CD4-positive, alpha-beta T cell (primary cell): ENCODE measurements at regions of chrX and their contacts with region 1.

Region 1: GRCh38 chrX:15674841-15675489 is 10.4 kb upstream of the CLTRN start:
- DNase-seq: peak; percentile 78 to 96 (median 86)
- ATAC-seq: peak; percentile 83
- H3K4me3 ChIP-seq: peak overlapping the region; percentile 90
- H3K4me3 Mint-ChIP-seq: no peak overlapping the region
- H3K27ac ChIP-seq: peak overlapping the region; percentile 99 to 100
- H3K27ac Mint-ChIP-seq: no peak overlapping the region
- H3K4me1 ChIP-seq: peaks cover 16% of the 10 kb centered on the region
- H3K4me1 Mint-ChIP-seq: no peaks in the 10 kb centered on the region
- H3K27me3 ChIP-seq: peaks cover 0 to 4% of the 10 kb centered on the region in 2 experiments
- H3K27me3 Mint-ChIP-seq: no peaks in the 10 kb centered on the region
- CTCF ChIP-seq: no peak

Region 2: GRCh38 chrX:15714529-15714928 is 39.6 kb after region 1 on chrX:
- CTCF ChIA-PET with region 1: no interaction called
- POLR2A ChIA-PET with region 1: no interaction called
- intact Hi-C with region 1: no loop called
- DNase-seq: no peak
- ATAC-seq: no peak
- H3K4me3 ChIP-seq: no peak overlapping the region
- H3K4me3 Mint-ChIP-seq: no peak overlapping the region
- H3K27ac ChIP-seq: no peak overlapping the region
- H3K27ac Mint-ChIP-seq: no peak overlapping the region
- H3K4me1 ChIP-seq: no peaks in the 10 kb centered on the region
- H3K4me1 Mint-ChIP-seq: no peaks in the 10 kb centered on the region
- H3K27me3 ChIP-seq: no peaks in the 10 kb centered on the region
- H3K27me3 Mint-ChIP-seq: no peaks in the 10 kb centered on the region
- CTCF ChIP-seq: no peak

Region 3: GRCh38 chrX:15737960-15738902 is 63.3 kb after region 1 on chrX and contains the start of gene CA5B:
- CTCF ChIA-PET with region 1: interaction called, 4 read pairs
- POLR2A ChIA-PET with region 1: interaction called, 13 read pairs
- intact Hi-C with region 1: loop called (anchors 2 to 5 kb)
- DNase-seq: peak; percentile 95 to 100 (median 97)
- ATAC-seq: peak; percentile 93
- H3K4me3 ChIP-seq: peak within 1 kb of the TSS; percentile 91
- H3K4me3 Mint-ChIP-seq: peak within 1 kb of the TSS; percentile 100
- H3K27ac ChIP-seq: peak within 1 kb of the TSS; percentile 64 to 82
- H3K27ac Mint-ChIP-seq: peak within 1 kb of the TSS; percentile 92
- H3K4me1 ChIP-seq: peaks cover 28% of the 10 kb centered on the region
- H3K4me1 Mint-ChIP-seq: peaks cover 55% of the 10 kb centered on the region
- H3K27me3 ChIP-seq: no peaks in the 10 kb centered on the region
- H3K27me3 Mint-ChIP-seq: no peaks in the 10 kb centered on the region
- CTCF ChIP-seq: no peak
- total RNA-seq, gene CA5B: 60.8 to 64.5 TPM

Region 4: DNA sequence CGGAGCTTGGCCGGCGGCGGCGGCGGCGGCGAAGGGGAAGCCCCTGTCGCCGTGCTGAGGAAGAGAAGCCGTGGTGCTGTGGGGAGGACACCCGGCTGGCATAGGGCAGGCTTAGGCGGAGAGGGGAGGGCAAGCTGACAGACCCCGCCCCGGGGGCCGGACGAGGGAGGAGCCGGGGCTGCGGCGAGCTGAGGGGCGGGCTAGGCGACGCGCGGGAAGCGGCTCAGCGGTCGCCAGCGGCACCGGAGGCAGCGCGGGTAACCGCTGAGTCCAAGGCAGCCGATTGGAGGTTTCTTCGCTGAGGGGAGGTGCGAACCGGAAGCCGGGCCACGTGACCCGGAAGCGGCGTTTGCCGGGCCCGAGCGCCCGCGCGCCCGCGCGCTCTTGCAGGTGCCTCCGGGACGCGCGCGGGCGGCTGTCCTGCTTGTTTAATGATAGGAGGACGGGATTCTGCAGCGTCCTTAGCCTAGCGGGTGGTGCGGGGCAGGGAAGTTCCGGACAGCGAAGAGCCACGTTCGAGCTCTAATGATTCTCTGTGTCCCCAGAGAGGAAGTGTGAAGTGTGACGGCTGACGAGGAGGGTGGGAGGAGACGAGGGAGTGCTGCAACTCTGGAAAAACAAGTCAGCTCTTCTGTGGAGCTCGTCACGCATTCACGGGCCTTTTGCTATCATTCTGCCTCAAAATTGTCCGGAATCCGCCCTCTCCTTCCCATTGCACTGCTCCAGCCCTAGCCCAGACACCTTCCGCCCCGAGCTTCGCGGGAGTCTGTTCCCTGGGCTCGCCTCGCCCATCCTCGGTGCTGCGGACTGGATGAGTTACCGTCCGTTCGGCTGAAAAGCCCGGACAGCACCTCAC is 180.0 kb after region 1 on chrX and contains the start of gene AP1S2:
- CTCF ChIA-PET with region 1: interaction called, 3 read pairs
- POLR2A ChIA-PET with region 1: interaction called, 19 read pairs
- intact Hi-C with region 1: loop called (anchors 1 to 2 kb)
- DNase-seq: peak; percentile 84 to 99 (median 94)
- ATAC-seq: peak; percentile 94
- H3K4me3 ChIP-seq: peak within 1 kb of the TSS; percentile 81
- H3K4me3 Mint-ChIP-seq: peak within 1 kb of the TSS; percentile 97
- H3K27ac ChIP-seq: peak within 1 kb of the TSS; percentile 87 to 89
- H3K27ac Mint-ChIP-seq: peak within 1 kb of the TSS; percentile 100
- H3K4me1 ChIP-seq: peaks cover 5% of the 10 kb centered on the region
- H3K4me1 Mint-ChIP-seq: peaks cover 38% of the 10 kb centered on the region
- H3K27me3 ChIP-seq: no peaks in the 10 kb centered on the region
- H3K27me3 Mint-ChIP-seq: no peaks in the 10 kb centered on the region
- CTCF ChIP-seq: no peak
- total RNA-seq, gene AP1S2: 20.0 to 20.8 TPM

Region 5: GRCh38 chrX:16786139-16786790 is 1111.3 kb after region 1 on chrX and contains the start of gene TXLNG:
- CTCF ChIA-PET with region 1: no interaction called
- POLR2A ChIA-PET with region 1: no interaction called
- intact Hi-C with region 1: loop called in 1 of 2 experiments (anchors 10 kb)
- DNase-seq: peak; percentile 85 to 98 (median 94)
- ATAC-seq: peak; percentile 94
- H3K4me3 ChIP-seq: peak within 1 kb of the TSS; percentile 76
- H3K4me3 Mint-ChIP-seq: peak within 1 kb of the TSS; percentile 97
- H3K27ac ChIP-seq: peak within 1 kb of the TSS; percentile 84 to 87
- H3K27ac Mint-ChIP-seq: peak within 1 kb of the TSS; percentile 84
- H3K4me1 ChIP-seq: peaks cover 12% of the 10 kb centered on the region
- H3K4me1 Mint-ChIP-seq: peaks cover 29% of the 10 kb centered on the region
- H3K27me3 ChIP-seq: no peaks in the 10 kb centered on the region
- H3K27me3 Mint-ChIP-seq: no peaks in the 10 kb centered on the region
- CTCF ChIP-seq: no peak
- total RNA-seq, gene TXLNG: 17.2 to 17.5 TPM

Region 6: DNA sequence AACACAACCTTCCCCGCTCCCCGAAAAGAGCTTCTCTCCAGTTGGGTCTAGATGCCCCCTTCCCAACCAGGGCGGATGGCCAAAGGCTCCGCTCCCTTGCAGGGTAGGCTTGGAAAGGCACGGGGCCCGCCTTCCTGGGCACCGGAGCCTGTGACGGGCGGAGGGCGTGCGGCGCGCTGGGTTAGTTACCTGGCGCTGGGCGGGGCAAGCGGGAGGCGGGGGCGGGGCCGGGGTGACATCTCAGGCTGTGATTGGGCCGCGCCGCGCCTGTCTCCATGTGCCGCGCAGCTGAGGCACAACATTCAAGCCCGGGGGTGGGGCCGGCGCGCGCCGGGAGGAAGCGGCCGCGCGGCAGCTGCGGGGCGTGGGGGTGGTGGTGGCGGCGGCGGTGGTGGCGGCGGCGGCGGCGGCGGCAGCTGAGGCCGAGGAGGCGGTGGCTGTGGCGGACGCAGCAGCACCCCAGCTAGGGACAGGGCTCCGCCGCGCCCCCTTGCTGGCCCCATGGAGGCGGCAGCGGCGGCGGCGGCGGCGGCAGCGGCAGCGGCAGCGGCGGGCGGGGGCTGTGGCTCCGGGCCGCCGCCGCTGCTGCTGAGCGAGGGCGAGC is 1271.5 kb after region 1 on chrX and contains the start of gene REPS2:
- CTCF ChIA-PET with region 1: no interaction called
- POLR2A ChIA-PET with region 1: no interaction called
- intact Hi-C with region 1: loop called in 1 of 2 experiments (anchors 10 kb)
- DNase-seq: peak; percentile 51 to 90 (median 76)
- ATAC-seq: peak; percentile 97
- H3K4me3 ChIP-seq: peak within 1 kb of the TSS; percentile 59
- H3K4me3 Mint-ChIP-seq: peak within 1 kb of the TSS; percentile 89
- H3K27ac ChIP-seq: no peak within 1 kb of the TSS
- H3K27ac Mint-ChIP-seq: peak within 1 kb of the TSS; percentile 70
- H3K4me1 ChIP-seq: peaks cover 12% of the 10 kb centered on the region
- H3K4me1 Mint-ChIP-seq: no peaks in the 10 kb centered on the region
- H3K27me3 ChIP-seq: no peaks in the 10 kb centered on the region
- H3K27me3 Mint-ChIP-seq: no peaks in the 10 kb centered on the region
- CTCF ChIP-seq: no peak
- total RNA-seq, gene REPS2: 0.53 to 0.60 TPM